ENCODE measurements at regions of chr15 and their contacts with region 1.

Region 1: GRCh38 chr15:63945007-63945788 is 101.1 kb downstream of the DAPK2 start:
- DNase-seq: peak; percentile 80
- CTCF ChIP-seq: peak; percentile 84

Region 2: DNA sequence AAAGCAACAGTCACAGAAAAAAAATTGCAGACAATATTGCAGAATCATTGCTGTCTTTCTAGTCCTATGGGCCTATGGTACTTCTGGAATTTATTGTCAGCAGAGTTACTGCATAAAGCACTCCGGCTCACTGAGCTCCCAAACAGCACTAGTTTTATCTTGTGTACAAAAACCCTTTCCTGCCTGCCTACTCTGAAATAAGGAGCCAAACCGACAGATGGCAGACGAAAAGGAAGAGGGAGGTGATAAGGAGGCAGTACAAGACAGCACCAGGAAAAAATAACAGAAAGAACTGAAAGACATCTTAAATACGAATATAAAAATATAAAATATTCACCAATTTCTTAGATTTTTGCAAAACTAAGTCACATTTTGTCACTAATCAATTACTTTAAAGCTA is 127.0 kb before region 1 on chr15:
- CTCF ChIA-PET with region 1: no interaction called
- POLR2A ChIA-PET with region 1: no interaction called
- DNase-seq: no peak
- CTCF ChIP-seq: no peak

Region 3: DNA sequence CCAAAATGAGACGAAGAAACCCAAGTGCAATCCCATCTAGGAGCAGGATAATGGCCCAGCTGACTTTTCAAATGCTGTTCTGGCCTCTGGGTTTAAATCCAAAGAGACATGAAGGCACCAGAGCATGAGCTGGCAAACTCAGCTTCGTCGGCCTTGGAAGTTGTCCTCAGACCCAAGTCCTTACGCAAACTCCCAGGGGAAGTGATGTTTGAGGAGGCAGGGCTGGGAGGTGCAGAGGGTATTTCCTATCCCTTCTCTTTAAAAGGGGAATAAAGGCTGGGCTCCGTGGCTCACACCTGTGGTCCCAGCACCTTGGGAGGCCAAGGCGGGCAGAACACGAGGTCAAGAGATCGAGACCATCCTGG is 42.5 kb before region 1 on chr15:
- CTCF ChIA-PET with region 1: interaction called, 26 read pairs
- POLR2A ChIA-PET with region 1: no interaction called
- DNase-seq: no peak
- CTCF ChIP-seq: no peak

Region 4: GRCh38 chr15:63928185-63928842 is 16.9 kb before region 1 on chr15:
- CTCF ChIA-PET with region 1: interaction called, 40 read pairs
- POLR2A ChIA-PET with region 1: no interaction called
- DNase-seq: no peak
- CTCF ChIP-seq: no peak

Region 5: GRCh38 chr15:63970621-63971426 is 25.6 kb after region 1 on chr15:
- CTCF ChIA-PET with region 1: interaction called, 59 read pairs
- POLR2A ChIA-PET with region 1: interaction called, 4 read pairs
- DNase-seq: peak; percentile 78
- CTCF ChIP-seq: no peak

Region 6: DNA sequence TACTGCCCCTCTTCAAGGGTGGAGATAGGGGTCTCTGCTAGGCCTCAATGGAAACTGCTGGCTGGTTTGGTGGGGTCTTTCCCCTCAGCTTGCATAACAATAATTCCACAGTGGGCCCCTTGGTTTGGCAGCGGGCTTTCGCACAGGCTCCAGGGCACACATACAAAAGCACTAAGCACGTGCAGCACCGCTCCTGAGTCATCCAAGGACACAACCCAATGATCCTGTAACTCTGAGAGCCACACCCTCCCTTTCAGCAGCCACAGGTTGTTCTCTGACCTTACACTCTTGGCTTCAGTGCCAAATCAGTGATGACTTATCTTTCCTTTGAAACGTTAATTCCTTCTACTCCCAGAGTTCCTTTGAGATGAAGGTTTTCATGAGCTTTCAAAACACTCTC is 59.4 kb after region 1 on chr15:
- CTCF ChIA-PET with region 1: interaction called, 10 read pairs
- POLR2A ChIA-PET with region 1: no interaction called
- DNase-seq: no peak
- CTCF ChIP-seq: no peak

Region 7: DNA sequence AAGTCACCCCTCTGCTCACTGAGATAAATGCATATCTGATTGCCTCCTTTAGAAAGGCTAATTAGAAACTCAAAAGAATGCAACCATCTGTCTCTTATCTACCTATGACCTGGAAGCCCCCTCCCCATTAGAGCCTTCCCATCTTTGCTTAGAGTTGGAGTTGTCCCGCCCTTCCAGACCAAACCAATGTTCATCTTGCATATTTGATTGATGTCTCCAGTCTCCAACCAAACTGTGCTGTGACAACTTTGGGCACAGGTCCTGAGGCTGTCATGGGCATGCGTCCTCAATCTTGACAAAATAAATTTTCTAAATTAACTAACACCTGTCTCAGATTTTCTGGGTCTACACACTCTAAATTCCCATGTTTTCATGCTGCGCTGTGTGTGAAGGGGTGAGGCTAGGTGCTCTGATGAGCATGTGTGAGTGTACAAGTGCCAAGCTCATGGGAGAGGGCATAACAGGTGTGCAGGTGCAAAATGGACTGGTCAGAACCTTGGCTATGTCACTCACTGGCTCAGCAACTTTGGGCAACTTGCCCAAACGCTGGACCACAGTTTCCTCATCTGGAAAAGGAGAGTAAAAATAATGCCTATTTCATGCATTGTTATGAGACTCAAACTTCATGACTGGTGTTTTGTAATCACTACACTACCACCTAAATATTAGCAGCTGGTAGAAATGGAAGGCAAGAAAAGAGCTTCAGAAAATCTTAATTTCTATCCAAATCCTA is 93.8 kb after region 1 on chr15:
- CTCF ChIA-PET with region 1: interaction called, 68 read pairs
- POLR2A ChIA-PET with region 1: no interaction called
- DNase-seq: no peak
- CTCF ChIP-seq: no peak

Region 8: GRCh38 chr15:64067564-64068030 is 122.4 kb after region 1 on chr15:
- CTCF ChIA-PET with region 1: interaction called, 10 read pairs
- POLR2A ChIA-PET with region 1: no interaction called
- DNase-seq: peak; percentile 78
- CTCF ChIP-seq: peak; percentile 70

Region 9: GRCh38 chr15:64224511-64224910 is 279.3 kb after region 1 on chr15:
- CTCF ChIA-PET with region 1: no interaction called
- POLR2A ChIA-PET with region 1: no interaction called
- DNase-seq: no peak
- CTCF ChIP-seq: no peak